ENCODE measurements at regions of chr18 and their contacts with region 1.

Region 1: DNA sequence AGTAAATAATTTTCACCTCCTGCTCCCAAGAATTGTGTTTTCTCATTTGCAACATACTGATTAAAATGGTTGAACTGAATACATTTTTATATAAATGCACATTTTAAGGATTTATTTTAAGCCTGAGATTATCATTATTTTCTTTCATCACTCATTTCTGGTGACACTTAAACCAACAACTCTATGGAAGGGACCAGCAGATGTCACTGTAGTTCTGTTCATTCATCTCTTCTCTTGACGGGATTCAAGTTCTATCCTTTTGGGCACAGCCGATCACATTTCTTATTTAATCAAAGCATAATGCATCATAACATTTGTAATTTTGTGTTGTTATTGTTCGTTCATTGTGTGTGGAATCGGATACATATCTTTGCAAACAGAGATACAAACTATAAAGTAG is 417.9 kb downstream of the HRH4 start:
- DNase-seq: no peak
- H3K4me3 ChIP-seq: no peak overlapping the region
- H3K27ac ChIP-seq: no peak overlapping the region
- H3K4me1 ChIP-seq: no peaks in the 10 kb centered on the region
- H3K27me3 ChIP-seq: no peaks in the 10 kb centered on the region
- CTCF ChIP-seq: no peak

Region 2: GRCh38 chr18:25176523-25177042 is 298.3 kb after region 1 on chr18:
- intact Hi-C with region 1: no loop called
- DNase-seq: no peak
- H3K4me3 ChIP-seq: no peak overlapping the region
- H3K27ac ChIP-seq: no peak overlapping the region
- H3K4me1 ChIP-seq: no peaks in the 10 kb centered on the region
- H3K27me3 ChIP-seq: no peaks in the 10 kb centered on the region
- CTCF ChIP-seq: no peak

Region 3: DNA sequence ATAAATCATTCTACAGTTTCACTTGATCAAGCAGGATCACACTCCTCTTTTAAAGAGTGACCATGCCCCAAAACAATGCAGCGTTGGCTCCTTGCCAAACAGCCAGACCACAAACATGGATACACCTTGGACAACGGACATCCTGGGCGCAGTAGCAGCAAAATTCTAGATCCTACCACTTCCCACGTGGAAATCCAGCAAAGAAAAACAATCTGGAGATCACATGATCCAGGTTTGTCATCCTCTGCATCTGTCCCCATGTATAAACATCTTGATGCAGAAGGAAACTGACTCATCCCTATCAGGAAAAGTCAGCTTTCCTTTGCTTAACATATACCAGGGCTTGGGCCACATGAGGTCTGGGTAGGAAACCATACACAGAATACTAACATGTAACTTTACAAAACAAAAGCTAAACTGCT is 420.6 kb after region 1 on chr18:
- intact Hi-C with region 1: no loop called
- DNase-seq: no peak
- H3K4me3 ChIP-seq: no peak overlapping the region
- H3K27ac ChIP-seq: no peak overlapping the region
- H3K4me1 ChIP-seq: no peaks in the 10 kb centered on the region
- H3K27me3 ChIP-seq: no peaks in the 10 kb centered on the region
- CTCF ChIP-seq: no peak

Region 4: DNA sequence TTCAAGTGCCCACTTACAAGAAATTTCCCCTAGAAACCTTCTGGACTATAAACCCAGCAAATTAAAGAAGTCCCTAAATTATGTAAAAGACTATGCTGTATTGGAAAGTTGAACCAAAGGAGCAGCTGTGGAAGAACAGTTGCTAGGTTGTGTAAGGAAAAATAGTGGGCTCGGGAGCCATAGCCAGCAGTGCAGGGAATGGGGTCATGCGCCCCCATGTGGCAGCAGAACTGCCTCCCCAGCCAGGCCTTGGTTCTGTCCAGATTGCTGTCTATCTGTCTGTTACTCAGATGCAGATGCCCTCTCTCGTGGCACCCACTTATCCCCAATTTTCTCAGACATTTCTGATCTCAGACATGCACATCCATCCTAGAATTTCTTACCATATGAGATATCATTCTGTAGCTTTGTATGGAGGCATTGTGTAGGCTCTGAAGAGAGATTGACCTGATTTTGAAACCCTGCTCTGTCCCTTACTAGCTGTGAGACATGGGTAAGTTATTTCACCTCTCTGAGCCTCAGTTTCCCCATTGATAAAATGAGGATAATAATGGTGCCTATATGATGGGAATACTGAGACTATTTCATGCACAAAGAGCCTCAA is 953.8 kb after region 1 on chr18:
- intact Hi-C with region 1: loop called (anchors 10 kb)
- DNase-seq: peak; percentile 42
- H3K4me3 ChIP-seq: no peak overlapping the region
- H3K27ac ChIP-seq: no peak overlapping the region
- H3K4me1 ChIP-seq: no peaks in the 10 kb centered on the region
- H3K27me3 ChIP-seq: no peaks in the 10 kb centered on the region
- CTCF ChIP-seq: peak; percentile 61

Region 5: DNA sequence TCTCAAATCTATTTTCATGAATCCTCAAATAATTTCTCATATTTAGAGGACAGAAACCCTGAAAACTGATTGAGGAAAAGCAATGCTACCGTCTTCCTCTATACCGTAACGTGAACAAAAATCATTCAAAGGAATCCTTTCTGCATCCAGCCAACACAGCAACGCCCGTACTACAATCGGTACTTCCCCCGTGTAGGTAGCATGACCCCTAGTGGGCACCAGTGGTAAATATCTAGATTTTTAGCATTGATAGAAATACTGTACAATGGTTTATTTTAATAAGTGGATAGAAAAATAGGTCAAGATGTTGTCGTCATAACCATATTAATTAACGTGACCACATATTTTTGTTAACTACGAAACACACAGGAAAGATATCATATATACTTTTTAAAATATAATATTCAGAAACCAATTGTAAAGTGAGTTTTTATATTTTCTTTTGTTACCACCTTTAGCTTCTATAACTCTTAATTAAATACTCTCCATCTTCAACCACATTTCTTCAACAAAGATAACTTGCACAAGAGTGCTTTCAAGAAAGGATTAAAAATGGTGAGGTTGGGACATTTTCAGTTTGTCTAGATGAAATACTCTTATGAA is 1018.0 kb after region 1 on chr18:
- intact Hi-C with region 1: loop called (anchors 10 kb)
- DNase-seq: peak; percentile 34
- H3K4me3 ChIP-seq: no peak overlapping the region
- H3K27ac ChIP-seq: no peak overlapping the region
- H3K4me1 ChIP-seq: no peaks in the 10 kb centered on the region
- H3K27me3 ChIP-seq: no peaks in the 10 kb centered on the region
- CTCF ChIP-seq: peak; percentile 65